ENCODE measurements at regions of chr2 and their contacts with region 1.

Region 1: GRCh38 chr2:27703638-27704341 is 40.1 kb downstream of the SLC4A1AP start:
- DNase-seq: peak; percentile 73
- ATAC-seq: peak; percentile 71 to 79
- H3K4me3 ChIP-seq: no peak overlapping the region
- H3K27ac ChIP-seq: no peak overlapping the region
- H3K4me1 ChIP-seq: peaks cover 48% of the 10 kb centered on the region
- H3K27me3 ChIP-seq: no peaks in the 10 kb centered on the region
- CTCF ChIP-seq: peak; percentile 94

Region 2: GRCh38 chr2:28452534-28453081 is 748.8 kb after region 1 on chr2:
- intact Hi-C with region 1: loop called (anchors 10 kb)
- DNase-seq: peak; percentile 84
- ATAC-seq: peak; percentile 84 to 88
- H3K4me3 ChIP-seq: no peak overlapping the region
- H3K27ac ChIP-seq: no peak overlapping the region
- H3K4me1 ChIP-seq: peaks cover 17% of the 10 kb centered on the region
- H3K27me3 ChIP-seq: no peaks in the 10 kb centered on the region
- CTCF ChIP-seq: peak; percentile 89